WTC11 (cell line): ENCODE measurements at regions of chr11 and their contacts with region 1.

Region 1: GRCh38 chr11:76207642-76208401 is 1.5 kb upstream of the WNT11 start:
- DNase-seq: peak; percentile 84
- ATAC-seq: peak; percentile 40
- H3K4me3 Mint-ChIP-seq: peak overlapping the region; percentile 67
- H3K27ac Mint-ChIP-seq: no peak overlapping the region
- H3K4me1 Mint-ChIP-seq: peaks cover 24% of the 10 kb centered on the region
- H3K27me3 Mint-ChIP-seq: peaks cover 96% of the 10 kb centered on the region
- CTCF ChIP-seq: peak; percentile 83

Region 2: GRCh38 chr11:75896843-75897419 is 310.9 kb before region 1 on chr11:
- CTCF ChIA-PET with region 1: interaction called, 23 read pairs
- POLR2A ChIA-PET with region 1: no interaction called
- DNase-seq: no peak
- ATAC-seq: no peak
- H3K4me3 Mint-ChIP-seq: no peak overlapping the region
- H3K27ac Mint-ChIP-seq: no peak overlapping the region
- H3K4me1 Mint-ChIP-seq: no peaks in the 10 kb centered on the region
- H3K27me3 Mint-ChIP-seq: no peaks in the 10 kb centered on the region
- CTCF ChIP-seq: peak; percentile 58

Region 3: DNA sequence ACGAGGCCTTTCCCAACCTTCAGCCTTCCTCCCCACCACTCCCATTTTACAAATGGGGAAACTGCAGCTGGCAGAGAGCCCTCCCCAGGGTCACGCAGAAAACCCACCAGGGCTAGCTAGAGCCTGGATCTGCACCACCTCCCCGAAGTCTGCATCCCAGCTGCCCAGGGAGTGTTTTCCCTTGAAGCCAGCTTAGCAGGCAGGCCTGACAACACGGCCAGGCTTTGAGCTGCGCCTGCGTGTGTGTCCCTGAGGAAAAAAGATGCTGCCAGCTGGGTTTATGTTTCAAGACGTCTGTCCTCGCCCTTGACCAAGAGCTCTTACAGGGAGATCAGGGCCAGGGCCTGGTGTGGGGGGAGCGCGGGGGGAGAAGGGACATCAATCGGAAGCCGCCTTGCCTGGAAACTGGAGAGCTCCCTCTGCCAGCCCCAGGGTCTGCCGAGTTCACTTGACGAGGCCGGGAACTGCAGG is 21.9 kb before region 1 on chr11:
- CTCF ChIA-PET with region 1: interaction called, 85 read pairs
- POLR2A ChIA-PET with region 1: no interaction called
- DNase-seq: no peak
- ATAC-seq: no peak
- H3K4me3 Mint-ChIP-seq: no peak overlapping the region
- H3K27ac Mint-ChIP-seq: no peak overlapping the region
- H3K4me1 Mint-ChIP-seq: 0 out of 2 replicates have a peak, but pooled peaks cover 4% of the 10 kb centered on the region
- H3K27me3 Mint-ChIP-seq: no peaks in the 10 kb centered on the region
- CTCF ChIP-seq: no peak

Region 4: GRCh38 chr11:76248210-76248609 is 40.4 kb after region 1 on chr11:
- CTCF ChIA-PET with region 1: interaction called, 51 read pairs
- POLR2A ChIA-PET with region 1: no interaction called
- DNase-seq: peak; percentile 52
- ATAC-seq: peak; percentile 55
- H3K4me3 Mint-ChIP-seq: no peak overlapping the region
- H3K27ac Mint-ChIP-seq: no peak overlapping the region
- H3K4me1 Mint-ChIP-seq: peaks cover 14% of the 10 kb centered on the region
- H3K27me3 Mint-ChIP-seq: peaks cover 18% of the 10 kb centered on the region
- CTCF ChIP-seq: peak; percentile 25; the same call in 1 of the 2 replicates

Region 5: DNA sequence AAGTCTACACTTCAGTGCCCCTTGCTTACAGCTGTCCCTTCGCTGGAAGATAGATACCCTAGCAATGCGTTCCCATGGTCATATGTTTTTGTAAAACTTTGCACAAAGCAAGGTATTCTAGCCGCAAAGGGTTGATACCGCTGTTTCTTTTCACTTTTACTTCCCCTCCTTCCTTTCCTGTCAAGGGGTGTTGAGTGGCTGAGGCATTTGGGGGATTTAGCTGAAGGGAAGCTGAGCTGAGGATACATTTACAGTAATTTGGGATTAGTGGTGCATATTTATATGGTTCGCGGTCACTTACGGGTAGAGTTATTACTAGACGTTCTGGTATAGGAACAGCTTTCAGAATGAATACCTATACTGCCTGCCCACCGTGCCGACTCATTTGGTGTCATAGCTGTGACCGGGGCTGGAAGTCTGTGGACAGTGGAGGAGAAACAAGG is 85.4 kb after region 1 on chr11:
- CTCF ChIA-PET with region 1: interaction called, 59 read pairs
- POLR2A ChIA-PET with region 1: no interaction called
- DNase-seq: no peak
- ATAC-seq: no peak
- H3K4me3 Mint-ChIP-seq: no peak overlapping the region
- H3K27ac Mint-ChIP-seq: no peak overlapping the region
- H3K4me1 Mint-ChIP-seq: 0 out of 2 replicates have a peak, but pooled peaks cover 3% of the 10 kb centered on the region
- H3K27me3 Mint-ChIP-seq: no peaks in the 10 kb centered on the region
- CTCF ChIP-seq: no peak

Region 6: GRCh38 chr11:76329084-76329984 is 121.5 kb after region 1 on chr11:
- CTCF ChIA-PET with region 1: interaction called, 219 read pairs
- POLR2A ChIA-PET with region 1: no interaction called
- DNase-seq: peak; percentile 22
- ATAC-seq: peak; percentile 79
- H3K4me3 Mint-ChIP-seq: no peak overlapping the region
- H3K27ac Mint-ChIP-seq: no peak overlapping the region
- H3K4me1 Mint-ChIP-seq: peaks cover 11% of the 10 kb centered on the region
- H3K27me3 Mint-ChIP-seq: peaks cover 4% of the 10 kb centered on the region
- CTCF ChIP-seq: no peak